ENCODE measurements at regions of chr11 and their contacts with region 1.

Region 1: GRCh38 chr11:68584097-68584496 is 100.2 kb upstream of the GAL start:
- DNase-seq: peak; percentile 44 to 65 (median 48)
- ATAC-seq: peak in 2 of 4 donors; percentile 2 to 25
- H3K4me3 ChIP-seq: no peak overlapping the region
- H3K27ac ChIP-seq: peak overlapping the region in 10 of 12 donors; percentile 6 to 86 (median 76)
- H3K4me1 ChIP-seq: peaks cover 0 to 73% (median 32%) of the 10 kb centered on the region in 12 donors
- H3K27me3 ChIP-seq: no peaks in the 10 kb centered on the region
- CTCF ChIP-seq: peak in 11 of 12 donors; percentile 33 to 71 (median 56)
- POLR2A ChIP-seq: no peak

Region 2: DNA sequence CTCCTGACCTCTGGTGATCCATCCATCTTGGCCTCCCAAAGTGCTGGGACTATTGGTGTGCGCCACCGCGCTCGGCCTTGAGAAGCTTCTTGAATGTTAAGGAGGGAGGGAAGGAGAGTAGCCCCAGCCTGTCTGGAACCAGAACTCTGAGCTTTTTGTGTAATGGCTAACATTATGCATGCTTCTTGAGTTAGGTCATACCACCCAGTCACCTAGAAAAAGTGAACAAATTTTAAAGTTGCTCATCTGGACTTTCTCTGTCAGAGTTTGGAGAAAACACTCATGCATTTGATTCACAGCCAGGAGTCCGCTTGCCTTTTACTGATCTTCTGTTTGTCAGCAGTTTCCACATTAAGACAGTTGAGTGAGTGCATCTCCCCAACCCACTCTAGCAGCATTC is 41.5 kb before region 1 on chr11:
- intact Hi-C with region 1: loop called in 2 of 10 experiments (anchors 5 kb)
- DNase-seq: no peak
- ATAC-seq: no peak
- H3K4me3 ChIP-seq: no peak overlapping the region
- H3K27ac ChIP-seq: peak overlapping the region in 2 of 12 donors; percentile 3 to 64
- H3K4me1 ChIP-seq: peaks cover 3 to 62% (median 30%) of the 10 kb centered on the region in 12 donors
- H3K27me3 ChIP-seq: no peaks in the 10 kb centered on the region
- CTCF ChIP-seq: no peak
- POLR2A ChIP-seq: no peak

Region 3: GRCh38 chr11:68704887-68705286 is 120.8 kb after region 1 on chr11:
- intact Hi-C with region 1: no loop called
- DNase-seq: no peak
- ATAC-seq: no peak
- H3K4me3 ChIP-seq: no peak overlapping the region
- H3K27ac ChIP-seq: no peak overlapping the region
- H3K4me1 ChIP-seq: peaks cover 0 to 3% (median 0%) of the 10 kb centered on the region in 12 donors
- H3K27me3 ChIP-seq: peaks cover 0 to 40% (median 0%) of the 10 kb centered on the region in 9 donors
- CTCF ChIP-seq: no peak
- POLR2A ChIP-seq: no peak